ENCODE measurements at regions of chr1 and their contacts with region 1.

Region 1: GRCh38 chr1:171801487-171801891 is 20.0 kb downstream of the METTL13 start:
- DNase-seq: no peak
- H3K4me3 ChIP-seq: no peak overlapping the region
- H3K27me3 ChIP-seq: no peaks in the 10 kb centered on the region
- CTCF ChIP-seq: peak; percentile 81

Region 2: GRCh38 chr1:171715813-171716251 is 85.7 kb before region 1 on chr1:
- CTCF ChIA-PET with region 1: interaction called, 17 read pairs
- POLR2A ChIA-PET with region 1: no interaction called
- DNase-seq: peak; percentile 10
- H3K4me3 ChIP-seq: no peak overlapping the region
- H3K27me3 ChIP-seq: no peaks in the 10 kb centered on the region
- CTCF ChIP-seq: peak; percentile 51

Region 3: GRCh38 chr1:171781176-171781875 is 20.2 kb before region 1 on chr1 and contains the start of gene METTL13:
- CTCF ChIA-PET with region 1: interaction called, 13 read pairs
- POLR2A ChIA-PET with region 1: no interaction called
- DNase-seq: peak; percentile 97
- H3K4me3 ChIP-seq: peak within 1 kb of the TSS; percentile 75
- H3K27me3 ChIP-seq: no peaks in the 10 kb centered on the region
- CTCF ChIP-seq: 0 out of 2 replicates have a peak, but pooled peaks have one; percentile 11
- polyA plus RNA-seq, gene METTL13: 25.9 and 30.1 TPM in 2 replicates

Region 4: GRCh38 chr1:171817511-171818265 is 16.2 kb after region 1 on chr1:
- CTCF ChIA-PET with region 1: interaction called, 25 read pairs
- POLR2A ChIA-PET with region 1: interaction called, 3 read pairs
- DNase-seq: peak; percentile 39
- H3K4me3 ChIP-seq: no peak overlapping the region
- H3K27me3 ChIP-seq: no peaks in the 10 kb centered on the region
- CTCF ChIP-seq: no peak

Region 5: GRCh38 chr1:171984850-171985485 is 183.5 kb after region 1 on chr1:
- CTCF ChIA-PET with region 1: interaction called, 382 read pairs
- POLR2A ChIA-PET with region 1: no interaction called
- DNase-seq: no peak
- H3K4me3 ChIP-seq: no peak overlapping the region
- H3K27me3 ChIP-seq: no peaks in the 10 kb centered on the region
- CTCF ChIP-seq: peak; percentile 74